ENCODE measurements at regions of chr6 and their contacts with region 1.

Region 1: GRCh38 chr6:77893391-77893790 is 240.6 kb downstream of the MEI4 start:
- DNase-seq: no peak
- ATAC-seq: no peak
- H3K4me3 ChIP-seq: no peak overlapping the region
- H3K27ac ChIP-seq: no peak overlapping the region
- H3K4me1 ChIP-seq: no peaks in the 10 kb centered on the region
- H3K27me3 ChIP-seq: no peaks in the 10 kb centered on the region
- CTCF ChIP-seq: no peak
- EP300 ChIP-seq: no peak
- POLR2A ChIP-seq: no peak
- RAD21 ChIP-seq: no peak

Region 2: GRCh38 chr6:77786935-77787629 is 106.3 kb before region 1 on chr6:
- CTCF ChIA-PET with region 1: no interaction called
- POLR2A ChIA-PET with region 1: no interaction called
- in situ Hi-C with region 1: no loop called
- intact Hi-C with region 1: loop called (anchors 10 kb)
- DNase-seq: no peak
- ATAC-seq: peak; percentile 82
- H3K4me3 ChIP-seq: no peak overlapping the region
- H3K27ac ChIP-seq: no peak overlapping the region
- H3K4me1 ChIP-seq: peaks cover 6% of the 10 kb centered on the region; the same call in 1 of the 2 replicates
- H3K27me3 ChIP-seq: no peaks in the 10 kb centered on the region
- CTCF ChIP-seq: no peak
- EP300 ChIP-seq: no peak
- POLR2A ChIP-seq: no peak
- RAD21 ChIP-seq: no peak

Measured in HepG2 (cell line).